ENCODE measurements at regions of chrX and their contacts with region 1.

Region 1: GRCh38 chrX:16123222-16123786 is at the start of gene GRPR:
- DNase-seq: peak; percentile 29
- ATAC-seq: peak; percentile 76
- H3K4me3 Mint-ChIP-seq: no peak within 1 kb of the TSS
- H3K27ac Mint-ChIP-seq: no peak within 1 kb of the TSS
- H3K4me1 Mint-ChIP-seq: peaks cover 33% of the 10 kb centered on the region
- H3K27me3 Mint-ChIP-seq: peaks cover 2% of the 10 kb centered on the region
- CTCF ChIP-seq: peak; percentile 25
- total RNA-seq, gene GRPR: 0.16 and 0.37 TPM in 2 replicates

Region 2: GRCh38 chrX:15674841-15675489 is 448.3 kb before region 1 on chrX:
- CTCF ChIA-PET with region 1: no interaction called
- POLR2A ChIA-PET with region 1: no interaction called
- intact Hi-C with region 1: loop called (anchors 5 kb)
- DNase-seq: peak; percentile 75
- ATAC-seq: peak; percentile 83
- H3K4me3 Mint-ChIP-seq: no peak overlapping the region
- H3K27ac Mint-ChIP-seq: no peak overlapping the region
- H3K4me1 Mint-ChIP-seq: peaks cover 13% of the 10 kb centered on the region
- H3K27me3 Mint-ChIP-seq: no peaks in the 10 kb centered on the region
- CTCF ChIP-seq: no peak

Region 3: DNA sequence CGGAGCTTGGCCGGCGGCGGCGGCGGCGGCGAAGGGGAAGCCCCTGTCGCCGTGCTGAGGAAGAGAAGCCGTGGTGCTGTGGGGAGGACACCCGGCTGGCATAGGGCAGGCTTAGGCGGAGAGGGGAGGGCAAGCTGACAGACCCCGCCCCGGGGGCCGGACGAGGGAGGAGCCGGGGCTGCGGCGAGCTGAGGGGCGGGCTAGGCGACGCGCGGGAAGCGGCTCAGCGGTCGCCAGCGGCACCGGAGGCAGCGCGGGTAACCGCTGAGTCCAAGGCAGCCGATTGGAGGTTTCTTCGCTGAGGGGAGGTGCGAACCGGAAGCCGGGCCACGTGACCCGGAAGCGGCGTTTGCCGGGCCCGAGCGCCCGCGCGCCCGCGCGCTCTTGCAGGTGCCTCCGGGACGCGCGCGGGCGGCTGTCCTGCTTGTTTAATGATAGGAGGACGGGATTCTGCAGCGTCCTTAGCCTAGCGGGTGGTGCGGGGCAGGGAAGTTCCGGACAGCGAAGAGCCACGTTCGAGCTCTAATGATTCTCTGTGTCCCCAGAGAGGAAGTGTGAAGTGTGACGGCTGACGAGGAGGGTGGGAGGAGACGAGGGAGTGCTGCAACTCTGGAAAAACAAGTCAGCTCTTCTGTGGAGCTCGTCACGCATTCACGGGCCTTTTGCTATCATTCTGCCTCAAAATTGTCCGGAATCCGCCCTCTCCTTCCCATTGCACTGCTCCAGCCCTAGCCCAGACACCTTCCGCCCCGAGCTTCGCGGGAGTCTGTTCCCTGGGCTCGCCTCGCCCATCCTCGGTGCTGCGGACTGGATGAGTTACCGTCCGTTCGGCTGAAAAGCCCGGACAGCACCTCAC is 268.4 kb before region 1 on chrX and contains the start of gene AP1S2:
- CTCF ChIA-PET with region 1: interaction called, 3 read pairs
- POLR2A ChIA-PET with region 1: interaction called, 9 read pairs
- intact Hi-C with region 1: loop called (anchors 1 kb)
- DNase-seq: peak; percentile 88
- ATAC-seq: peak; percentile 90
- H3K4me3 Mint-ChIP-seq: peak within 1 kb of the TSS; percentile 91
- H3K27ac Mint-ChIP-seq: peak within 1 kb of the TSS; percentile 98
- H3K4me1 Mint-ChIP-seq: peaks cover 31% of the 10 kb centered on the region
- H3K27me3 Mint-ChIP-seq: no peaks in the 10 kb centered on the region
- CTCF ChIP-seq: no peak
- total RNA-seq, gene AP1S2: 42.3 and 45.9 TPM in 2 replicates

Region 4: GRCh38 chrX:15930585-15930984 is 192.7 kb before region 1 on chrX:
- CTCF ChIA-PET with region 1: interaction called, 10 read pairs
- POLR2A ChIA-PET with region 1: no interaction called
- intact Hi-C with region 1: loop called (anchors 2 kb)
- DNase-seq: no peak
- ATAC-seq: no peak
- H3K4me3 Mint-ChIP-seq: no peak overlapping the region
- H3K27ac Mint-ChIP-seq: no peak overlapping the region
- H3K4me1 Mint-ChIP-seq: peaks cover 14% of the 10 kb centered on the region
- H3K27me3 Mint-ChIP-seq: no peaks in the 10 kb centered on the region
- CTCF ChIP-seq: no peak

Region 5: GRCh38 chrX:16138108-16138427 is 14.8 kb after region 1 on chrX:
- CTCF ChIA-PET with region 1: interaction called, 15 read pairs
- POLR2A ChIA-PET with region 1: no interaction called
- intact Hi-C with region 1: loop called (anchors 1 kb)
- DNase-seq: no peak
- ATAC-seq: peak; percentile 51
- H3K4me3 Mint-ChIP-seq: no peak overlapping the region
- H3K27ac Mint-ChIP-seq: no peak overlapping the region
- H3K4me1 Mint-ChIP-seq: peaks cover 13% of the 10 kb centered on the region
- H3K27me3 Mint-ChIP-seq: no peaks in the 10 kb centered on the region
- CTCF ChIP-seq: no peak

Region 6: GRCh38 chrX:16394290-16394689 is 271.0 kb after region 1 on chrX:
- CTCF ChIA-PET with region 1: no interaction called
- POLR2A ChIA-PET with region 1: no interaction called
- intact Hi-C with region 1: no loop called
- DNase-seq: no peak
- ATAC-seq: no peak
- H3K4me3 Mint-ChIP-seq: no peak overlapping the region
- H3K27ac Mint-ChIP-seq: no peak overlapping the region
- H3K4me1 Mint-ChIP-seq: no peaks in the 10 kb centered on the region
- H3K27me3 Mint-ChIP-seq: no peaks in the 10 kb centered on the region
- CTCF ChIP-seq: no peak

Region 7: GRCh38 chrX:16436348-16437188 is 313.3 kb after region 1 on chrX:
- CTCF ChIA-PET with region 1: no interaction called
- POLR2A ChIA-PET with region 1: no interaction called
- intact Hi-C with region 1: loop called (anchors 1 kb)
- DNase-seq: peak; percentile 15
- ATAC-seq: peak; percentile 25
- H3K4me3 Mint-ChIP-seq: no peak overlapping the region
- H3K27ac Mint-ChIP-seq: no peak overlapping the region
- H3K4me1 Mint-ChIP-seq: no peaks in the 10 kb centered on the region
- H3K27me3 Mint-ChIP-seq: peaks cover 6% of the 10 kb centered on the region
- CTCF ChIP-seq: no peak

Region 8: GRCh38 chrX:16695079-16695676 is 571.9 kb after region 1 on chrX:
- CTCF ChIA-PET with region 1: no interaction called
- POLR2A ChIA-PET with region 1: no interaction called
- intact Hi-C with region 1: loop called (anchors 10 kb)
- DNase-seq: peak; percentile 35
- ATAC-seq: peak; percentile 69
- H3K4me3 Mint-ChIP-seq: no peak overlapping the region
- H3K27ac Mint-ChIP-seq: no peak overlapping the region
- H3K4me1 Mint-ChIP-seq: no peaks in the 10 kb centered on the region
- H3K27me3 Mint-ChIP-seq: no peaks in the 10 kb centered on the region
- CTCF ChIP-seq: no peak